Activated CD4-positive, alpha-beta memory T cell treated with anti-CD3 and anti-CD28 coated beads for 36 hours (primary cell): ENCODE measurements at regions of chr6 and their contacts with region 1.

Region 1: GRCh38 chr6:122730775-122731386 is 48.6 kb upstream of the FABP7 start:
- DNase-seq: no peak
- H3K4me3 Mint-ChIP-seq: no peak overlapping the region
- H3K27ac Mint-ChIP-seq: no peak overlapping the region
- H3K4me1 Mint-ChIP-seq: no peaks in the 10 kb centered on the region
- H3K27me3 Mint-ChIP-seq: no peaks in the 10 kb centered on the region

Region 2: DNA sequence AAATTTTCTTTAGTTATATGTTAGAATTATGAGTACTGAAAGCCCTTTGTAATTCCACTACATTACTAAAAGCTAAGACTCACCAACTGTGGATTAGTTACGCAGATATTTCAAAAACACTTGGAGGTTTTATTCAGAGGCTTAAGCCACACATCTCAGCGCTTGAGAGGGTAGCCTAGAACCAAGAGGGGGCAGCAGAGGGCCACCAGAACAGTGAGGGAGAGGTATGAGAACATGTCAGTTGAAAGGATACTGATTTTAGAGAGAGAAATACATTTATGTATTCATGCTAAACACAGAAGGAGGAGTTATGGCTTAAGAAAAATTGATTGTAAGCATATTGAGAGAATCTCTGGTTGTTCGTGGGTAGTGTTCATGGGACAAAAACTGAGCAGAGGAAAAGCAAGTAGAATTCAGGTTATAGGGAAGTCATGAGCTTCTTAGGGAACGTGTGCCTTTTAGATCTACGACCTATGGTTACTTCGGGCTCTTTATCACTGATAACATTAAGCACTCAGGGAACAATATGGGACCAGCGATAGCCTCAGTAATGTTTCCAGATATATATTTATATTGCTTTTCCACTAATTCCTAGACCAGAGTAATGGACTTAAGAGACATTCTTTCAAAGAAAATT is 238.8 kb before region 1 on chr6:
- CTCF ChIA-PET with region 1: interaction called, 8 read pairs
- POLR2A ChIA-PET with region 1: no interaction called
- intact Hi-C with region 1: loop called (anchors 5 kb)
- DNase-seq: peak; percentile 78
- H3K4me3 Mint-ChIP-seq: no peak overlapping the region
- H3K27ac Mint-ChIP-seq: no peak overlapping the region
- H3K4me1 Mint-ChIP-seq: peaks cover 5% of the 10 kb centered on the region
- H3K27me3 Mint-ChIP-seq: peaks cover 8% of the 10 kb centered on the region

Region 3: GRCh38 chr6:122663981-122664380 is 66.9 kb before region 1 on chr6:
- CTCF ChIA-PET with region 1: no interaction called
- POLR2A ChIA-PET with region 1: no interaction called
- intact Hi-C with region 1: no loop called
- DNase-seq: no peak
- H3K4me3 Mint-ChIP-seq: no peak overlapping the region
- H3K27ac Mint-ChIP-seq: no peak overlapping the region
- H3K4me1 Mint-ChIP-seq: no peaks in the 10 kb centered on the region
- H3K27me3 Mint-ChIP-seq: peaks cover 1% of the 10 kb centered on the region

Region 4: DNA sequence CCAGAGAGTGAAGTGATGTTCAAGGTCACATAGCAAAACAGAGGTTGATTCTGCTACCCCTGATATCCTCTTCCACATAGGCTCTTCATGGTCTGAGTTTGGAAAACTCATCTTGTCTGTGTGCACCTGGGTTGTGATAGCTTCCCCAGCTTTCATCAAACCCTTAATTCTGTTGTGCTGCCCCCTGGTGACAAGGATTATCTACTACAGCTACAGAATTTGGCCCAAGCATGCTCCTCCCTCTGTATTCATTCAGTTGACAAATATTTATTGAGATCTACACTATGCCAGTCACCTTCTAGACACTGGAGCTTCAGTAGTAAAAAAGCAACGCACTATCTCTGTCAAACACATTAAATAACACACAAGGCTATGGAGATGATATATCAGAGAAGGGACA is 108.6 kb after region 1 on chr6:
- CTCF ChIA-PET with region 1: interaction called, 59 read pairs
- POLR2A ChIA-PET with region 1: no interaction called
- intact Hi-C with region 1: loop called (anchors 1 kb)
- DNase-seq: peak; percentile 50
- H3K4me3 Mint-ChIP-seq: no peak overlapping the region
- H3K27ac Mint-ChIP-seq: no peak overlapping the region
- H3K4me1 Mint-ChIP-seq: no peaks in the 10 kb centered on the region
- H3K27me3 Mint-ChIP-seq: peaks cover 5% of the 10 kb centered on the region

Region 5: DNA sequence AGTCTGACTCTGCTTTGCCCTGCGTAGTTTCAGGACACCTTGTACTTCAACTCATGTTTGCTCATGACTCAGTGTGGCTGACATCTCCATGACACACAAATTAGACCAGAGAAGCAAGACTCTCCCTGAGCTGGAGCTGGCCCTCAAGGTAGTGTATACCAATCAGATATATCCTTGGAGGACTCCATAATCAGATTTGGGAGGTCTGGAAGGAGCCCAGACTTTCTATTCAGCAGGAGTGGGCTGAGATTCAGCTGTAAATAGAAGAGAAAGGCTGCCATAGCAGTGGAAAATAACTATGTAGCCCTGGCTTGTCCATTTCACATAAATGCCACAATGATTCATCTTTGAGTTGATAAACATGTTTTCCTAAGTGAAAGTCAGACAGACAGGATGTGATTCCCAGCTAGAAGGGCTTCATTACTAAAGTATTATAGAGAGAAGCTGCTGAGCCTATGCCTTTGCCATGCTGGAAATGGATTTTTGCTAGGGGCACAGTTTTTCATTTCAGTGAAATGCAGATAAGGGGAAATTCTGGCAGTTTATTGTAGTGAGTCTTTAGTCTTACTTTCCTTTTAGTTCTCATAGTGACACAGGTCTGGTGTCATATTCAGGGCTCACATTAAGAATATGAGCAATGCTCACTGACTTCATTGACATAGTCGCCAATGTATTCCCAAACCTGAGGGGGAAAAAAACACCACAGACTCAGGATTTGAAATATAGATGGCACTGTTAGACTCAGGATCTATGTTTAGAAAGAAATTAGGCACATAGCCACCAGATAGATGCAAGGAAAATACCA is 360.4 kb after region 1 on chr6:
- CTCF ChIA-PET with region 1: no interaction called
- POLR2A ChIA-PET with region 1: no interaction called
- intact Hi-C with region 1: no loop called
- DNase-seq: no peak
- H3K4me3 Mint-ChIP-seq: no peak overlapping the region
- H3K27ac Mint-ChIP-seq: no peak overlapping the region
- H3K4me1 Mint-ChIP-seq: no peaks in the 10 kb centered on the region
- H3K27me3 Mint-ChIP-seq: no peaks in the 10 kb centered on the region

Region 6: GRCh38 chr6:123316733-123317323 is 585.9 kb after region 1 on chr6:
- CTCF ChIA-PET with region 1: interaction called, 3 read pairs
- POLR2A ChIA-PET with region 1: no interaction called
- intact Hi-C with region 1: loop called (anchors 1 kb)
- DNase-seq: no peak
- H3K4me3 Mint-ChIP-seq: no peak overlapping the region
- H3K27ac Mint-ChIP-seq: no peak overlapping the region
- H3K4me1 Mint-ChIP-seq: no peaks in the 10 kb centered on the region
- H3K27me3 Mint-ChIP-seq: no peaks in the 10 kb centered on the region